BJ (cell line): ENCODE measurements at regions of chr12 and their contacts with region 1.

Region 1: DNA sequence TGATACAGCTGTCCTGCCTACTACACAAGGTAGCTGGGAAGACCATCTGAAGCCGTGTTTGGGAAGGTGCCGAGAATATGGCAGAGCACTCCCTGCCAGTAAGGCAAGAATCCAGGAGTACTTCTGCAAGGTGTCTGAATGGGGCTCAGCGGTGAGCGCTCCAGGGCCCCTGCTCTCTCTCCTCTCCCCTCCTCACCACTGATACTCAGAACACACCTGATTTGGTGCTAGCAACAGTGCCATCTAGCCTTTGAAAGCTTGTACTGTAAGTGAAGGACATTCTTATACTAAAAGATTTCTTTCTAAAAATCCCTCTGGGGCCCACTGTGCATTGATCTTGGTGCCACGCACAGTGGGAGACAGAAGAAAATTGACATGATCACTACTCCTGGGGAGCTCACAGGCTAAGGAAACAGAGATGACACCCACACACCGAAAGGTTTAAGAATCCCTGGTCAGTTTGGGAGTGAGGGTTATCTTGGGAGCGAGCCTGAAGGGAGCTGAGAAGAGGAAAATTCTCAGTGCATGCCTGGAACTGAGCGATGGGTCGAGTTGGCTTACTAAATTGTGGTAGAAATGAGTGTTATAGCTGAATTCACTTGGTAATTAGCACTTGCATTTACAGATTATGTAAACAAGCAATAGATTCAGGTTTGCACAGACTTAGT is 216.9 kb downstream of the NTF3 start:
- DNase-seq: no peak
- H3K4me3 ChIP-seq: no peak overlapping the region
- H3K27me3 ChIP-seq: peaks cover 2% of the 10 kb centered on the region; the same call in 1 of the 2 replicates
- CTCF ChIP-seq: peak; percentile 64

Region 2: DNA sequence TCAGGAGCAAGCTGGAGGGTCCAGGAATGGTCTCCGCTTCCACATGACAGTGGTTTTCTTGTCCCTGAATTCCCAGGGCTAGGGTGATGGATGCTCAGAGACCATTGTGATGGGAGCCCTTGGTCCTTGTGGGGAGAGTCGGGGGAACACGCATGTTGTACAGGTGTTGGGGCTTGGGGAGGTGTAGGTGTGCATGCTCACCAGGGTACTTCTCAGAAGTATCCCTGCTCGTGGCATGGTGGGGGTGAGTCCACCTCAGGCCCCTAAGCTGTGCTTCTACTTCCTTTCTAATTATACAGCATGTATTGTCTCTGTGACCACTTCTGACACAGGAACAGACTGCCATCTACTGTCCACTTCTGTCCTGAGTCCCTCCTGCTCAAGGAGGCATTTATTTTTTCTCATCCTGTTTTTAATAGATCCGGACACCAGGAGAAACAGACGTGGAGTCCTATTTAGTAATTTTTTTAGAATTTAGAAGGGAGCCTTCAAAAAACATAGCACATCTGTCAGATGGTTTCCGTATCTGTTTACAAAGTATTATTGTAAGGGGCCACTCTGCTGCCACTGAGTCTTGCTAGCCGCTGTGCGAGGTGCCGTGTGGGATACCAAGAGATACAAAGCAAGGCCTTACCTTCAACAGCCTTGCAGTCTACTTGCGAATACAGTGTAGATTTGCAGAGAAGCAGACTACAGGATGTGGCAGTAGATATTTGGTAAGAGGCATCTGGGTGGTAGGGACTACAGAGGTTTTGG is 206.4 kb before region 1 on chr12:
- CTCF ChIA-PET with region 1: interaction called, 10 read pairs
- POLR2A ChIA-PET with region 1: no interaction called
- DNase-seq: no peak
- H3K4me3 ChIP-seq: no peak overlapping the region
- H3K27me3 ChIP-seq: no peaks in the 10 kb centered on the region
- CTCF ChIP-seq: peak; percentile 71

Region 3: GRCh38 chr12:5511644-5512600 is 136.9 kb before region 1 on chr12:
- CTCF ChIA-PET with region 1: interaction called, 16 read pairs
- POLR2A ChIA-PET with region 1: no interaction called
- DNase-seq: no peak
- H3K4me3 ChIP-seq: no peak overlapping the region
- H3K27me3 ChIP-seq: 0 out of 2 replicates have a peak, but pooled peaks cover 1% of the 10 kb centered on the region
- CTCF ChIP-seq: peak; percentile 84

Region 4: DNA sequence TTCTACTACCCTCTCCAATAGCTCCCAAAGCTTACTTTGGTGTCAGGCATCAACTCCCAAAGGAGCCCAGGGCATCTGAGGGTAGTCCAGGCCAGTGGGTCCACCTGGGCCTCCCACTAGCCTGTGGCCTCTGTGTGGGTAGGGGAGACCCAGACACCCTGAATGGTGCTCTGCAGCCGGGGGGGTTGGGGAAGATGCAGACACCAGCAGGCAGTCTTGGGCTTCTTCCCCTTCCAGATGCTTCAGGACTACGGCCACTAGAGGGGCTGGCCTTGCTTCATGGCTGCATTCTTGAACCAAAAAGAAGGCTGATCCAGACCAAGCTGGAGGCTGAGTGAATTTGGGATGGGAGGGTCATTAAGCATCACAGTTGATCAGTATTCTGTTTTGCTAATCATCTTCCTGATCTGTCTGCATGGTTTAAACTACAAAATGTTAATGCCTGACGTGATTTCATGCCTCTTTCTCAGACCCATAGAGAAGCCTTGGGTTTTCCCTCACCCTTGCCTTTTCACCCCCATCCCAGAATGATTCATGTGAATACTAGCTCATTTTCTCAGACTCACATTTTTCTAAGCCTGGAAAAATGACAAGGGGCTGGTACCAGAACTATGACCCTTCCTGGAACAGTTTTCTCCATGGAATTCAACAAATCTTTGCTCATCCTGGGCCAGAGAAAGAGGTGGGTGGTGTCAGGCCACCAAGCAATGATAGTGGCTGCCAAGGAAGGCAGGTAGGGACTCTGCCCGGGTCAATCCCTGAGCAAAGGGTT is 82.7 kb before region 1 on chr12:
- CTCF ChIA-PET with region 1: interaction called, 11 read pairs
- POLR2A ChIA-PET with region 1: no interaction called
- DNase-seq: peak; percentile 28
- H3K4me3 ChIP-seq: no peak overlapping the region
- H3K27me3 ChIP-seq: peaks cover 7% of the 10 kb centered on the region
- CTCF ChIP-seq: peak; percentile 29

Region 5: GRCh38 chr12:5661811-5662210 is 13.0 kb after region 1 on chr12:
- CTCF ChIA-PET with region 1: interaction called, 25 read pairs
- POLR2A ChIA-PET with region 1: no interaction called
- DNase-seq: no peak
- H3K4me3 ChIP-seq: no peak overlapping the region
- H3K27me3 ChIP-seq: no peaks in the 10 kb centered on the region
- CTCF ChIP-seq: no peak

Region 6: GRCh38 chr12:6363611-6364328 is 714.9 kb after region 1 on chr12:
- CTCF ChIA-PET with region 1: no interaction called
- POLR2A ChIA-PET with region 1: no interaction called
- DNase-seq: no peak
- H3K4me3 ChIP-seq: peak overlapping the region; percentile 63
- H3K27me3 ChIP-seq: peaks cover 1% of the 10 kb centered on the region; the same call in 1 of the 2 replicates
- CTCF ChIP-seq: peak; percentile 12; the same call in 1 of the 2 replicates